Activated B cell treated with CpG ODN at 0.5 μM for 24 hours (primary cell): ENCODE measurements at regions of chr7 and their contacts with region 1.

Region 1: GRCh38 chr7:127365164-127365956 is 27.1 kb downstream of the ZNF800 start:
- DNase-seq: no peak
- ATAC-seq: no peak
- H3K4me3 Mint-ChIP-seq: no peak overlapping the region
- H3K27ac Mint-ChIP-seq: no peak overlapping the region
- H3K4me1 Mint-ChIP-seq: no peaks in the 10 kb centered on the region
- H3K27me3 Mint-ChIP-seq: no peaks in the 10 kb centered on the region
- CTCF ChIP-seq: no peak

Region 2: GRCh38 chr7:127375631-127376030 is 10.3 kb after region 1 on chr7:
- CTCF ChIA-PET with region 1: no interaction called
- POLR2A ChIA-PET with region 1: no interaction called
- intact Hi-C with region 1: loop called (anchors 2 kb)
- DNase-seq: no peak
- ATAC-seq: no peak
- H3K4me3 Mint-ChIP-seq: no peak overlapping the region
- H3K27ac Mint-ChIP-seq: no peak overlapping the region
- H3K4me1 Mint-ChIP-seq: peaks cover 31% of the 10 kb centered on the region
- H3K27me3 Mint-ChIP-seq: no peaks in the 10 kb centered on the region
- CTCF ChIP-seq: no peak